ENCODE measurements at regions of chr7 and their contacts with region 1.

Region 1: GRCh38 chr7:56063882-56064625 is at the start of gene SUMF2:
- DNase-seq: peak; percentile 93 to 96
- ATAC-seq: peak; percentile 99
- H3K4me3 ChIP-seq: peak within 1 kb of the TSS; percentile 88
- H3K27ac ChIP-seq: peak within 1 kb of the TSS; percentile 91
- H3K4me1 ChIP-seq: peaks cover 9% of the 10 kb centered on the region
- H3K27me3 ChIP-seq: no peaks in the 10 kb centered on the region
- CTCF ChIP-seq: no peak
- total RNA-seq, gene SUMF2: 22.0 to 35.2 (median 22.8) TPM

Region 2: DNA sequence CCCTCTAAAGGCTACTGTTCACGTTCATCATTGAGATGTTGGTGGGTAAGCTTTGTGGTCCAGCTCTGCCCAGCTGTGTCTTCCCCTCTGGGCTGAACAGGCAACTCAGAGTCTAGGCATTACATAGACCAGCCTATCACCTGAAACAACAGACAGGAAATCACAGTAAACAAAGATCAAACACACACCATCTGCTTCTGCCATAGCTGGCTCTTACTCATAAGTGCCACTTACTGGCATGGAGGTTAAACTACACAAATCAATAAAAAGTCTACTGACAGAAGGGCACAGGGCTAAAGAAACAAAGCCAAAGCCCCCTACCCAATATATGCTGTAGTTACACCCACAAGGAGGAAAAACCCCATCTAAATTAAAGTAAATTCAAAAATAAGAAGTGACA is 236.5 kb before region 1 on chr7:
- intact Hi-C with region 1: no loop called
- DNase-seq: no peak
- ATAC-seq: no peak
- H3K4me3 ChIP-seq: no peak overlapping the region
- H3K27ac ChIP-seq: no peak overlapping the region
- H3K4me1 ChIP-seq: no peaks in the 10 kb centered on the region
- H3K27me3 ChIP-seq: no peaks in the 10 kb centered on the region
- CTCF ChIP-seq: no peak

Region 3: GRCh38 chr7:56033671-56034432 is 30.2 kb before region 1 on chr7:
- intact Hi-C with region 1: loop called in 1 of 2 experiments (anchors 2 kb)
- DNase-seq: peak; percentile 48 to 59
- ATAC-seq: peak; percentile 70 to 91 (median 87)
- H3K4me3 ChIP-seq: peak overlapping the region; percentile 78
- H3K27ac ChIP-seq: peak overlapping the region; percentile 41
- H3K4me1 ChIP-seq: peaks cover 7% of the 10 kb centered on the region
- H3K27me3 ChIP-seq: no peaks in the 10 kb centered on the region
- CTCF ChIP-seq: peak; percentile 10

Measured in psoas muscle (tissue), 8 donors.